Adrenal gland (tissue), 19 donors: ENCODE measurements at regions of chr20 and their contacts with region 1.

Region 1: DNA sequence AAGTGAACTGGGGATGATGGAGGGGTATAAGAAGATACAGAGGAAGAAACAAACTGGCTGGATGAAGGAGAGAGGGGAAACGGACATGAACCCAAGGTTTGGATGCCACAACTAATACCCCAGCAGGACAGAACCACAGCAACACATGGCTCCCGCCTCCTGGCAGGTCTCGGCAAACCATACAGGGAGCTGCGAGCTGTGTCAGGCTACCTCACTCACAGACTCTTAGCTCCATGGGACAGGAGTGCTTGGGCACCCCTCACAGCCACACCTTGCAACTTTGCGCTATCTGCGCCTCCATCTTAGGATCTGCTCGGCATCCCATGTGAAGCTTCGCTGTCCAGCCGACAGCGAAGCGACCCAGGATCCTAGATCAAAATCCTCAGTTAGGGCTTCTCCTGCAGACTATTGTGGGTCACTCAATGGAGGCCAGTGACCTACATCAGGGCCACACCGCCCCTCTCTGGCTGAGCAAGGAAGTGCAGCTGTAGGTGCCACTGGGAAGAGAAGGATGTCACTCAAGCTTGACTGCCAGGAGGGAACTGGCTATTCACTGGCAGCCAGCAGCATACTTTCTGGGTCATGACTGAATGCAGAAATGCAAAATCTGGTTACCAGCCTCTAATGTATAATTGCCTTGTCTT is 174.4 kb upstream of the RIN2 start:
- DNase-seq: peak; percentile 62 to 88 (median 78)
- H3K4me3 ChIP-seq: no peak overlapping the region
- H3K27ac ChIP-seq: no peak overlapping the region
- H3K4me1 ChIP-seq: no peaks in the 10 kb centered on the region
- H3K27me3 ChIP-seq: no peaks in the 10 kb centered on the region
- CTCF ChIP-seq: peak; percentile 85 to 92 (median 88)
- POLR2A ChIP-seq: no peak

Region 2: GRCh38 chr20:18904624-18905023 is 679.0 kb before region 1 on chr20:
- intact Hi-C with region 1: loop called in 1 of 2 experiments (anchors 10 kb)
- DNase-seq: peak; percentile 22 to 54 (median 40)
- H3K4me3 ChIP-seq: no peak overlapping the region
- H3K27ac ChIP-seq: no peak overlapping the region
- H3K4me1 ChIP-seq: no peaks in the 10 kb centered on the region
- H3K27me3 ChIP-seq: no peaks in the 10 kb centered on the region
- CTCF ChIP-seq: peak; percentile 20 to 58 (median 50)
- POLR2A ChIP-seq: no peak